ENCODE measurements at regions of chr2 and their contacts with region 1.

Region 1: DNA sequence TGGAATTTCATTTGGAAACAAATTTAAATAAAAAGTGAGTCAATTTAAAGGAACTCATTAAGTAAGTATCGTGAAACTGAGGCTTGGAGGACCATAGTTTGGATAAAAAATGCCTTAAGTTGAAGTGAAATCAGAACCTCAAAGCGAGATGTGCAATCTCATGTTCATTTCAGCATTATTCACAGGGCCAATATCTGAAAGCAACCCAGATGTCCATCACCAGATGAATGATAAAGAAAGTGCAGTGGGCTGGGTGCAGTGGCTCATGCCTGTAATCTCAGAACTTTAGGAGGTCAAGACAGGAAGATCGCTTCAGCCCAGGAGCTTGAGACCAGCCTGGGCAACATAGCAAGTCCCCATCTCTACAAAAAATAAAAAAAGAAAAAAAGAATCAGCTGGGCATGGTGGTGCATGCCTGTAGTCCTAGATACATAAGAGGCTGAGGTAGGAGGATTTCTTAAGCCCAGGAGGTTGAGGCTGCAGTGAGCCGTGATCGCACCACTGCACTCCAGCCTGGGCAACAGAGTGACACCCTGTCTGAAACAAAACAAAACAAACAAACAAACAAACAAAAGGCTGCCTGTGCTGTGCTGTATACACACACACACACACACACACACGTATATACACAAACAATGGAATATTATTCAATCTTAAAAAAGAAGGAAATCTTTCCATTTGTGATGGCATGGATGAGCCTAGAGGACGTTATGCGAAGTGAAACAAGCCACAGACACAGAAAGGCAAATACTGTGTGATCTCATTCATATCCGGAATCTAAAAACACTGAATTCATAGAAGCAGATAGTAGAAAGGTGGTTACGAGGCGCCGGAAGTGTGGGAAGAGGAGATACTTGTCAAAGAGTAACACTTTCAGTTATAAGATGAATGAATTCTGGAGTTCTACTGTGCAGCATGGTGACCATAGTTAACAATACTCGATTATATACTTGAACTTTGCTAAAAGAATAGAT is 14.5 kb downstream of the SH3RF3 start:
- DNase-seq: peak; percentile 62
- H3K4me3 Mint-ChIP-seq: peak overlapping the region; percentile 16
- H3K27ac Mint-ChIP-seq: peak overlapping the region; percentile 46
- H3K4me1 Mint-ChIP-seq: peaks cover 35% of the 10 kb centered on the region
- H3K27me3 Mint-ChIP-seq: peaks cover 53% of the 10 kb centered on the region

Region 2: GRCh38 chr2:108877506-108877905 is 266.0 kb before region 1 on chr2:
- intact Hi-C with region 1: no loop called
- DNase-seq: no peak
- H3K4me3 Mint-ChIP-seq: no peak overlapping the region
- H3K27ac Mint-ChIP-seq: no peak overlapping the region
- H3K4me1 Mint-ChIP-seq: no peaks in the 10 kb centered on the region
- H3K27me3 Mint-ChIP-seq: no peaks in the 10 kb centered on the region

Region 3: GRCh38 chr2:109318150-109318948 is 174.8 kb after region 1 on chr2:
- intact Hi-C with region 1: no loop called
- DNase-seq: no peak
- H3K4me3 Mint-ChIP-seq: no peak overlapping the region
- H3K27ac Mint-ChIP-seq: no peak overlapping the region
- H3K4me1 Mint-ChIP-seq: no peaks in the 10 kb centered on the region
- H3K27me3 Mint-ChIP-seq: peaks cover 24% of the 10 kb centered on the region

Region 4: GRCh38 chr2:109341355-109342255 is 198.1 kb after region 1 on chr2:
- intact Hi-C with region 1: loop called (anchors 5 kb)
- DNase-seq: no peak
- H3K4me3 Mint-ChIP-seq: no peak overlapping the region
- H3K27ac Mint-ChIP-seq: no peak overlapping the region
- H3K4me1 Mint-ChIP-seq: peaks cover 17% of the 10 kb centered on the region
- H3K27me3 Mint-ChIP-seq: peaks cover 36% of the 10 kb centered on the region